ENCODE measurements at regions of chr1 and their contacts with region 1.

Region 1: GRCh38 chr1:154318386-154318785 is 2.5 kb upstream of the AQP10 start:
- DNase-seq: no peak

Region 2: GRCh38 chr1:156284728-156285127 is 1966.3 kb after region 1 on chr1:
- intact Hi-C with region 1: loop called in 1 of 2 experiments (anchors 5 kb)
- DNase-seq: no peak

Measured in posterior vena cava (tissue), 2 donors.